Activated T-helper 1 cell treated with anti-CD3 and anti-CD28 coated beads, Interleukin-12 subunit alpha, Interleukin-12 subunit beta, Interleukin-2, Interleukin-4 antibody, amounts not matched to agents 30 ng/mL and 10 ng/mL and 1 ng/mL, durations not matched to agents 14 hours and 24 hours and 36 hours (primary cell): ENCODE measurements at regions of chr5 and their contacts with region 1.

Region 1: GRCh38 chr5:134086943-134087305 is 27.6 kb upstream of the TCF7 start:
- DNase-seq: peak; percentile 62
- H3K4me3 Mint-ChIP-seq: peak overlapping the region; percentile 66
- H3K27ac Mint-ChIP-seq: peak overlapping the region; percentile 90
- H3K4me1 Mint-ChIP-seq: peaks cover 67% of the 10 kb centered on the region
- H3K27me3 Mint-ChIP-seq: peaks cover 27% of the 10 kb centered on the region

Region 2: DNA sequence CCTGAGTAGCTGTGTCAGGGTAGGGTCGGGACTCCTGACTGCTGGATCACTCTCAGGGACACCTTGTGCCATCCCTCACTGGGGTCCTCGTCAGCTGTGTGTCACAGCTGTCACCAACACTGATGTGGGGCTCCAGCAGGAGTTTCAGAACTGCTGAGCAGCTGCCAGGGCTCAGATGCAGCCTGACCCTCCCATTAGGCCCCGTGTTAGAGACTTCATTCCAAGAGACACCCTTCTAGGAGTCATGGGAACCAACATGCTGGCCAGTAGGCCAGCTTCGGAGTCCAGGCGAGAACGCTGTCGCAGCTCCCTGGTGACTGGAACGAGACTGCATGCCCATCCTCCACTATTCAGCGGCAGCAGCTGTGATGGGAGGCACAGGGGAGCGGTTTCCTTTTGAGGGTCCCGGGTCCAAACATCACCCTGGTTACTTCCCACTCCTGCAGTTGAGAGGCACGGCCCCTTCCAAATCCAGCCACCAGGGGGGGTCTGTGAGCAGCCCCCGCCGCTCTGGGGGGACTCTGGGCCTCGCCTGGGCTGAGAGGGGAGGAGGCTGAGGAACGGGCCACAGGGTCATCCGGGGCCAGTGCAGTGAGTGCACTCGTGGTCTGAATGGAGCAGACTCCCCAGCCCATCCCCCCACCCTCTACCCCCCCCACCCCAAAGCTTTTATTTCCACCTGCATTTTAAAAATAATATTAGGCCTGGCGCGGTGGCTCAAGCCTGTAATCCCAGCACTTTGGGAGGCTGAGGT is 14.9 kb after region 1 on chr5:
- intact Hi-C with region 1: loop called (anchors 1 kb)
- DNase-seq: peak; percentile 58
- H3K4me3 Mint-ChIP-seq: peak overlapping the region; percentile 26
- H3K27ac Mint-ChIP-seq: no peak overlapping the region
- H3K4me1 Mint-ChIP-seq: peaks cover 59% of the 10 kb centered on the region
- H3K27me3 Mint-ChIP-seq: peaks cover 36% of the 10 kb centered on the region

Region 3: DNA sequence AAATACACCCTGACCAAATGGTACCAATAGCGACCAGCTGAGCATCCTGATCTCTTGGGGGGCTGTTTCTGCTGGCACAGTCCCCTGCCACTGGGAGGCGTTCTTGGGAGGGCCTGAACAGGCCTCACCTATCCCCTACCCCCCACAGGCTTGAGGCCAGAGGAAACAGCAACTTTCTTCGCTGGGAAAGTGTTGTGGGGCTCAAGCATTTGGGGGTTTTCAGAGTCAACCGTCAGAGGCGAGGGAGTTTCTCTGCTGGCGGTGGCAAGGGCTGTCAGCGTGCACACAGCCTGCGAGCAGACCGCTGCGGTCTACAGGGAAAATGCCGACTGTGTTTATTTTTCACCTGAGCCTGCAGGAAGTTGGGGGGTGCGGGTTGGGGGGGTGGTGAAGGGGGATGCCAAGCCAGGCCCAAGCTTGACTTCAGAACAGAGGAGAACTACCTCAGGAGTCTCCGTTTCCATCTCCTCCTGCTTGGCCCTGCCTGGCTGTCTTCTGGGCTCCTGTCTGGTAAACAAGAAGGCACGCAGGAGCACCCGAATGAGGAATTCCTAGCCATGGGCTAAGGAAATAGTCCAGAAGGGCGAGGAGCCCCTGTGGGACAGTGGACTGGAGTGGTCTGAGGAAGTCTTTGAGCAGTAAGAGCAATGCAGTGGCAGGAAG is 45.6 kb after region 1 on chr5:
- intact Hi-C with region 1: loop called (anchors 1 kb)
- DNase-seq: peak; percentile 74
- H3K4me3 Mint-ChIP-seq: peak overlapping the region; percentile 64
- H3K27ac Mint-ChIP-seq: peak overlapping the region; percentile 86
- H3K4me1 Mint-ChIP-seq: peaks cover 89% of the 10 kb centered on the region
- H3K27me3 Mint-ChIP-seq: peaks cover 15% of the 10 kb centered on the region

Region 4: DNA sequence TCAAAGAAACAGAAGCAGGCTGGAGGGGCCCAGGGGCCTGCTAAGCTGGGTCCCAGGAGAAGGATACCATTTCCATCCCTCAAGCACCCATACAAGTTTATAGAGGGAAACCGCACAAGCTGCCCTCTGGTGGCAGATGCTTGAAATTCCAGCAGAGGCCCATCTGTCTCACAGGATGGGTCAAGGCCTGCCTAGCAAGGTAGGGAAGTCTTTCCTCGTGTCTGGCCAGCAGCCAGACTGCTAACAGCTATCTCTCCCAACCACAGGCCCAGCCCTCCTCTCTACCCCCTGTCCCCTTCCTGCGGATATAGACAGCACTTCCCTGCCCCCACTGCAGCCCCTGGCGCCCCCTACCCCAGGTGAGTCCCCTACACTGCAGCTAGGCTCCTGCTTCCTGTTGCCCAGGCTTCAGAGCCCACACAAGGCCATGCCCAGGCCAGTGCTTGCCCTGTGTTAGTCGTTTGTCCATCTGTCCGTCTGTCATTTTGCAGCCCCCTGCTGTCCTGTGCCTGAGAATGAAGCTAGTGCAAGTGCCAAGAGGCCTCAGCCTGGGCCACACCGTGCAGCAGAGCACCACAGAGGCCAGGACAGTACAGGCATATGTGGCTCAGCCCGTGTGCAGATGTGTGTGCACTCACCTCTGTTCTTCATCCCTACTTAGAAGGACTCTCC is 53.7 kb after region 1 on chr5:
- intact Hi-C with region 1: loop called (anchors 1 kb)
- DNase-seq: peak; percentile 43
- H3K4me3 Mint-ChIP-seq: no peak overlapping the region
- H3K27ac Mint-ChIP-seq: no peak overlapping the region
- H3K4me1 Mint-ChIP-seq: peaks cover 65% of the 10 kb centered on the region
- H3K27me3 Mint-ChIP-seq: peaks cover 4% of the 10 kb centered on the region